ENCODE measurements at regions of chr7 and their contacts with region 1.

Region 1: GRCh38 chr7:91264046-91264923 is at the start of gene FZD1:
- DNase-seq: peak; percentile 99
- ATAC-seq: peak; percentile 89
- H3K4me3 ChIP-seq: peak within 1 kb of the TSS; percentile 75
- H3K27ac ChIP-seq: peak within 1 kb of the TSS; percentile 89
- H3K4me1 ChIP-seq: peaks cover 4% of the 10 kb centered on the region
- H3K27me3 ChIP-seq: no peaks in the 10 kb centered on the region
- CTCF ChIP-seq: no peak
- POLR2A ChIP-seq: peak; percentile 63; the same call in 1 of the 2 replicates
- RAD21 ChIP-seq: peak; percentile 25; the same call in 1 of the 2 replicates
- total RNA-seq, gene FZD1: 3.6 and 4.4 TPM in 2 replicates

Region 2: DNA sequence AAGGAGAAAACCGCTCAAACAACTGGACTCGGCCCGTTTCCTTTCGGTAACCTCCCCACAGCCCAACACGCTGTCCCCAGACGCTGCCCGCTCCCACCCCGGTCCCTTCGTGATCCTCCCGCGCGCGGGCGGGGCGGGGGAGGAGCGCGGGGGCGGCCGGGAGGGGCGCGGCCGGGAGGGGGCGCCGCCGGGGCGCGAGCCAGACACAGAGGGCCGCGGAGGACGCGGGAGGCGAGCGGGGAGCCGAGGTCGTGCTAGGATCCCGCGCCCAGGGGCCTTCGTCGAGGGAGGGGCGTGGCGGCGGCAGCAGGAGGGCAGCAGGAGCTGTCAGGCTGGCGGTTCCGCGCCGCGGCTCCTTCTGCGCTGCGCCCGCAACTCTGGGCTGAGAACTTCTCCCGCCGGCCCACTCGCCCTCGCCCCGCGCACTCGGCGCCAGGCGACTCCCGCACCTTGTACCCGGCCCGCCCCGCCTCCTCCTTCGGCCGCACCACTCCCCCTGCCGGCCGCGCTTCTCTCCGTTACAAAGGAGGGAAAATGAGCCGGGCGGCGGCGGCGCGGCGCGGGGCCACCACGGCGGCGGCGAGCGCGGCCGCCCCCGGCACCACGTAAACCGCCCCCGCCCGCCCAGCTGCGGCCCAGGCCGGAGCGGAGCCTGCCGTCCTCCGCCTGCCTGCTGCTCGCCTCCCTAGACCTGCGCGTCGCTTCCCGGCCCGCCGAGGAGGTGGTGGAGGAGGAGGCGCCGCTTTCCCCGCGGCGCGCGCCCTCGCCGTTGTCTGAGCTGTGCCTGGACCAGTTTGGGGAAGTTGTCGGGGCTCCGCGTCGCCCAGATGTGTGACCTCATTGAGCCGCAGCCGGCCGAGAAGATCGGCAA is 668.2 kb before region 1 on chr7 and contains the start of gene CDK14:
- CTCF ChIA-PET with region 1: no interaction called
- POLR2A ChIA-PET with region 1: no interaction called
- dilution Hi-C with region 1: no loop called
- in situ Hi-C with region 1: no loop called
- intact Hi-C with region 1: loop called (anchors 2 kb)
- DNase-seq: peak; percentile 53
- ATAC-seq: peak; percentile 75
- H3K4me3 ChIP-seq: peak within 1 kb of the TSS; percentile 97
- H3K27ac ChIP-seq: peak within 1 kb of the TSS; percentile 88
- H3K4me1 ChIP-seq: peaks cover 2% of the 10 kb centered on the region; the same call in 1 of the 2 replicates
- H3K27me3 ChIP-seq: no peaks in the 10 kb centered on the region
- CTCF ChIP-seq: peak; percentile 52
- POLR2A ChIP-seq: no peak; the same call in 1 of the 2 replicates
- RAD21 ChIP-seq: peak; percentile 16; the same call in 1 of the 2 replicates
- total RNA-seq, gene CDK14: 28.1 and 29.6 TPM in 2 replicates

Region 3: GRCh38 chr7:91089382-91089963 is 174.8 kb before region 1 on chr7:
- CTCF ChIA-PET with region 1: interaction called, 8 read pairs
- POLR2A ChIA-PET with region 1: no interaction called
- dilution Hi-C with region 1: no loop called
- in situ Hi-C with region 1: loop called (anchors 5 kb)
- intact Hi-C with region 1: loop called (anchors 1 kb)
- DNase-seq: peak; percentile 48
- ATAC-seq: peak; percentile 74
- H3K4me3 ChIP-seq: peak overlapping the region; percentile 33; the same call in 1 of the 2 replicates
- H3K27ac ChIP-seq: no peak overlapping the region
- H3K4me1 ChIP-seq: no peaks in the 10 kb centered on the region
- H3K27me3 ChIP-seq: no peaks in the 10 kb centered on the region
- CTCF ChIP-seq: peak; percentile 73
- POLR2A ChIP-seq: no peak
- RAD21 ChIP-seq: peak; percentile 75

Region 4: GRCh38 chr7:91165006-91165845 is 99.1 kb before region 1 on chr7:
- CTCF ChIA-PET with region 1: no interaction called
- POLR2A ChIA-PET with region 1: no interaction called
- dilution Hi-C with region 1: no loop called
- in situ Hi-C with region 1: no loop called
- intact Hi-C with region 1: loop called (anchors 1 kb)
- DNase-seq: peak; percentile 88
- ATAC-seq: peak; percentile 86
- H3K4me3 ChIP-seq: no peak overlapping the region
- H3K27ac ChIP-seq: peak overlapping the region; percentile 79
- H3K4me1 ChIP-seq: peaks cover 14% of the 10 kb centered on the region
- H3K27me3 ChIP-seq: no peaks in the 10 kb centered on the region
- CTCF ChIP-seq: no peak
- POLR2A ChIP-seq: no peak
- RAD21 ChIP-seq: no peak

Region 5: DNA sequence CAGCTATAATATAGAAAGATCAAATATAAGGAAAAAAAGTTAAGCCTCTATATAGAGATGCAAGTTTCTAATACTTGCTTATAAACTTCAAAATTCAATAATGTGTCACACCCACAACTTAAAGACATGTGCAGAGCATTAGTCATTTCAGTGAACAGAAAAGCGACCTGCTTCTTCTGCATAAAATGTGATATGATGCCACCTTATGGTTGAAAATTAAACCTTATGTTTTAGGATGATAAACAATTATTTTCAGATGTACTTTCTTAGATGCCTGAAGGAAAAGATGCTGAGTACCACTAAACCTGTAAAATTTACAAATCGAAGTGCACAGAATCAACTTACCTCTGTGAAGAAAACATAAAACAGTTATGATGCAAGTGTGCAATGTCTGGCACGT is 520.2 kb after region 1 on chr7:
- CTCF ChIA-PET with region 1: no interaction called
- POLR2A ChIA-PET with region 1: no interaction called
- dilution Hi-C with region 1: no loop called
- in situ Hi-C with region 1: no loop called
- intact Hi-C with region 1: loop called (anchors 10 kb)
- DNase-seq: peak; percentile 61
- ATAC-seq: peak; percentile 70
- H3K4me3 ChIP-seq: no peak overlapping the region
- H3K27ac ChIP-seq: no peak overlapping the region
- H3K4me1 ChIP-seq: no peaks in the 10 kb centered on the region
- H3K27me3 ChIP-seq: no peaks in the 10 kb centered on the region; the same call in none of the 2 replicates
- CTCF ChIP-seq: peak; percentile 48
- POLR2A ChIP-seq: no peak
- RAD21 ChIP-seq: peak; percentile 62

Region 6: DNA sequence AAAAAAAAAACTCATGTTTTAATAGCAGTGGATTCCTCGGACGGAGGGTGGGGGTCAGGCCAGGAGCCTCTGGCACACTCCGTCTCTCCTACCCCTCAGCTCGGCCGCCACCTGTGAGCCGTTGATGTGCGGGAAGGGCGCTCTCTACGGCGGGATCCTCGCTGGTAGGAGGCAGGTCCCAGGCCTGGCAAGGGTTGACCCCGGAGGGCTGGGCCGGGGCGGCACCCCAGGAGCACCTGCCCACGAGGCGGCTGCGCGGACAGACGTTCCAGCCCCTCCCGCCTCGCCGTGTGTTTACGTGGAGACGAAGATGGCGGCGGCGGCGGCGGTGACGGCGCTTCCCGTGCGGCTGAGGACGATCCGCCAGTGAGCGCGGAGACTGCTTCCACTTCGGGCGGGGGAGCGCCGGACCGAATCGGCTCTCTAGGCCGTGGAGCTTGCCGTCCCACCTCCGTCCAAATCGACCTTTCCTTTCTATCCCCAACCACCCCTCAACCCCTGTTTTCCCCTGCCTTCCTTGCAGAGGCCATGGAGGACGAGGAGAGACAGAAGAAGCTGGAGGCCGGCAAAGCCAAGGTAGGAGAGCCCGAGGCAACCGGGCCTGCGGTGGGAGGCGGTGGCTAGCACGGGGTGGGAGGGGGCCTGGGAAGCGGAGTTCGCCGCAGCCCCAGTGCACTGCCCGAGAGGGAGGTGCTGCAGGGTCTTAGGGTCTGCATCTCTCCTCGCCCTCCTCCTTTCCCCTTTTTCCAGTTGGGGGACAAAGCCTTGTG is 676.5 kb after region 1 on chr7 and contains the start of gene AKAP9:
- CTCF ChIA-PET with region 1: no interaction called
- POLR2A ChIA-PET with region 1: no interaction called
- dilution Hi-C with region 1: no loop called
- in situ Hi-C with region 1: no loop called
- intact Hi-C with region 1: loop called (anchors 10 kb)
- DNase-seq: peak; percentile 57
- ATAC-seq: peak; percentile 86
- H3K4me3 ChIP-seq: peak within 1 kb of the TSS; percentile 80
- H3K27ac ChIP-seq: peak within 1 kb of the TSS; percentile 98
- H3K4me1 ChIP-seq: peaks cover 2% of the 10 kb centered on the region; the same call in 1 of the 2 replicates
- H3K27me3 ChIP-seq: no peaks in the 10 kb centered on the region
- CTCF ChIP-seq: no peak
- POLR2A ChIP-seq: peak; percentile 70; the same call in 1 of the 2 replicates
- RAD21 ChIP-seq: no peak
- total RNA-seq, gene AKAP9: 25.3 and 49.4 TPM in 2 replicates